Activated CD8-positive, alpha-beta T cell treated with anti-CD3 and anti-CD28 coated beads for 36 hours (primary cell): ENCODE measurements at regions of chr3 and their contacts with region 1.

Region 1: DNA sequence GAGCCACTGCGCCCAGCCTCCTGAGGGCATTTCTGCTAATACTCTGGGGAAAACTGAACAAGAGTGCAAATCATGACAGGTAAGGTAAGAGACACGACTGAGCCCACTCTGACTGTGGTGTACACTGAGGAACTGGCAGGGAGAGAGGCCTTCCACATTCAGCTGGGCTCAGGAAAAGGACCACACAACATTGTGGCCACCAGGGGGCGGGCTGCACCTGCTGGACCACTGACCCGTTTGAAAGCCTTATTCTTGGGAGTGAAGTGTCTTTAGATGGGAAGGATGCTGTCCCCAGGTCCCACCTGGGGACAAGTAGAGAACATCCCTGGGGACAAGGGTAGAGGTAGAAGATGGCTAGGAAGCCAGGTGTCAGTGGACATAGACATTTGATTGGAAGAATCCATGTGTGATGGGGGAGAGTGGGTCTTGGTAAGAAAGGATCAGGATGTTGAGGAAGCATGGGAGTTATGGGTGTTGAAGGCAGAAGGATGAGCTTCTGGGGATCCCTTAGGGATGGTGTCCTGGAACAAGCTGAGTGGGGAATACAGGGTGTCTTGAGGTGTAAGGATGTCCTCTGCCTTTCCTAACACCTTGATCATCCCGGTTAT is 6.2 kb upstream of the CTDSPL start:
- DNase-seq: peak; percentile 88
- ATAC-seq: peak; percentile 37
- H3K4me3 Mint-ChIP-seq: no peak overlapping the region
- H3K27ac Mint-ChIP-seq: no peak overlapping the region
- H3K4me1 Mint-ChIP-seq: peaks cover 6% of the 10 kb centered on the region
- H3K27me3 Mint-ChIP-seq: peaks cover 1% of the 10 kb centered on the region
- CTCF ChIP-seq: peak; percentile 96

Region 2: DNA sequence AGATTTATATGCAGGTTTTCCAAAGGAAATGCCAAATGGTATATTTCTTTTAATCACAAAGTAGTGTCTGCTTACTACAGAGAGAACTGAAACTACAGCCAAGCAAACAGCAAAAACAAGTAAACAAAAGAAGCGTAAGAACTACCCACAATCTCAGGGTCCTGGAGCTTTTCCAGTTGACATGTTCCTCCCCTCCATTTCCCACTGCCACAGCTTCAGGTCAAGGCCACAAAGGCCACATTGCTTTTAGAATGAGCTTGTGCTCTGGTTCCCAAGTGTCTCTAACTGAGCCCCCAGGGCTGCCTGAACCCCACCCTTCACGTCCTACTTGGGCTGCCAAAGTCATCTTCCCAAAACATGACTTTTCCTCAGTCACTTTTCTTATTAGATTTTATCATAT is 30.3 kb after region 1 on chr3:
- CTCF ChIA-PET with region 1: interaction called, 14 read pairs
- POLR2A ChIA-PET with region 1: no interaction called
- intact Hi-C with region 1: no loop called
- DNase-seq: no peak
- ATAC-seq: no peak
- H3K4me3 Mint-ChIP-seq: no peak overlapping the region
- H3K27ac Mint-ChIP-seq: no peak overlapping the region
- H3K4me1 Mint-ChIP-seq: no peaks in the 10 kb centered on the region
- H3K27me3 Mint-ChIP-seq: no peaks in the 10 kb centered on the region
- CTCF ChIP-seq: no peak

Region 3: DNA sequence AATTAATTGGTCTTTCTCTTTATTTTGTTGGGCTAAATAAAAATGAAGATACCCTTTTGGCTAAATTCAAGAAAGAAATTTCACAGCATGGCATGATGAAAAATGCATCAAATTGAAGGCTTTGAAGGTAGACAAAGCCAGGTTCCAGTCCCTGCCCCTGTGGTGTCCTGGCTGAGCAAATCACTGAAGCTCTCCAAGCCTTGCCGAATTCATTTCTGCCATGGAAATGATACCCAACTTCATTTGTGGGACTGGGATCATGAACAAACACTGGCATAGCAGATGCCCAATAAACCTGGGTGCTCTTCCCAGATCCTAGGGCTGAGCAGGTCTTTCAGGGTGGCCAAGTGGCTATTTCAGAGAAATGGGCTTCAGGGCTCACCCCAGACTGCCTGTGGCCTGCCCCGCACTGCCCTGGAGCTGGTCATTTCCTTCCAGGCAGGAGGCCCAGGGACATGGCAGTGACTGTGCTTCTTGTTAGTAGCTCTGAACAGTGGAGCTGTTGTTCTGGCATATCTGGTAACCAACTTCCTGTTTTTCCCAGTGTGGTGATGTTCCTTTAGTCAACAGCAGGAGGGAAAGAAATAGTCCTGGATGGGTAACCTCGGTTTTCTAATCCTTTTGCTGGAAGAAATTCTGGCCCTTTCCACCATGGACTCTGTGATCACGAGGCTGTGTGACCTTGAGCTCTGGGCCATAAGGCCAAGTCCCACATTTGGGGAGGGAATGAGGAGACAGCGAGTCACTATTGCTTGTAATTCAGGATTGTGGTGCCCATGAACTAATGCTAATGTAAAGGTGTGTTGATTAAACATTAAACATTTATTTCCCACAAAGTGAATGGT is 53.8 kb after region 1 on chr3:
- CTCF ChIA-PET with region 1: interaction called, 19 read pairs
- POLR2A ChIA-PET with region 1: no interaction called
- intact Hi-C with region 1: loop called (anchors 5 kb)
- DNase-seq: no peak
- ATAC-seq: no peak
- H3K4me3 Mint-ChIP-seq: no peak overlapping the region
- H3K27ac Mint-ChIP-seq: no peak overlapping the region
- H3K4me1 Mint-ChIP-seq: peaks cover 23% of the 10 kb centered on the region
- H3K27me3 Mint-ChIP-seq: peaks cover 5% of the 10 kb centered on the region
- CTCF ChIP-seq: no peak

Region 4: GRCh38 chr3:37956723-37957528 is 101.5 kb after region 1 on chr3:
- CTCF ChIA-PET with region 1: interaction called, 14 read pairs
- POLR2A ChIA-PET with region 1: interaction called, 3 read pairs
- intact Hi-C with region 1: no loop called
- DNase-seq: no peak
- ATAC-seq: no peak
- H3K4me3 Mint-ChIP-seq: no peak overlapping the region
- H3K27ac Mint-ChIP-seq: peak overlapping the region; percentile 82
- H3K4me1 Mint-ChIP-seq: peaks cover 19% of the 10 kb centered on the region
- H3K27me3 Mint-ChIP-seq: no peaks in the 10 kb centered on the region
- CTCF ChIP-seq: no peak

Region 5: DNA sequence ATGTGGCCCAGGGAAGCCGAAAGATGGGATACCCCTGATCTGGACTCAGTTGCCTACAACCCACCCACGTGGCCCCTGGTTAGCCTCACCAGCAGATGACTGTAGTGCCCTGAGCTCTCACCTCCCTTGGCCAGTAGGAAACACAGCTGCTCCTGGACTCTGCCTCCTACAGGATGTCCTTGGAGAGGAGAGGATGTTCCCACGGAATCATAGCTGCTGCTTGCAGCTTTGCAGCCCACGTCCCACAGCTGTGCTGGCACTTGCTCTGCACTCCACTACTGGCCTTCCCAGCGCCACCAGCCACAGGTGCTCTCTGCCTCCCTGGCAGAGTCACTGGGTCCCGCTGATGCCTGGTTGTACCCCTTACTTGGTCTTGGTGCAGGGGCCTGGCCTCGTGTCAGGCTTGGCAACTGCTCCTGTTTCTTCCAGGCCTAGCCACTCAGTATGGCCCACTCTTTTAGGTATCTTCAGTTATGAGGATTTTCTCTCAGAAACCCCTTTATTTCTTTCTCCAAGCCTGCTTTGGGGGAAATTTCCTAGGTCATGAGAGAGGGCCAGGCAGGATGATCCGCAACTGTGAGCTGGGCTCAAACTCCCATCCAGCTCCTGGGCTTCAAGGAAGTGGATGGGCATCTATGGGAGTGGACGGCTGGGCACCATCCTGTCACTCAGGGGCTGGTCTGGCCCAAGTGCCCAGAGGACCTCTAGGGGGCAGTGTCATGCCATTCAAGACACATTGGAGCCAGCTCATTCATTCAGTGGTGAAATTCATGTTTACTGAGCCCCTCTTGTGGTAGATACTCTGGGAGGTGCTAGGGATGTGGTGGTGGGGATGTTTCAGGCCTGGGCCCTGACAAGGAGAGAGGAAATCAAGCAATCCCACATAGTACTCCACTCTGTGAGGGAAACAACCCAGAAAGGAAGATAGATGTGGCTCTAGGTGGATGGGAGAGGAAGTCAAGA is 118.9 kb after region 1 on chr3:
- CTCF ChIA-PET with region 1: interaction called, 29 read pairs
- POLR2A ChIA-PET with region 1: no interaction called
- intact Hi-C with region 1: no loop called
- DNase-seq: peak; percentile 83
- ATAC-seq: peak; percentile 98
- H3K4me3 Mint-ChIP-seq: no peak overlapping the region
- H3K27ac Mint-ChIP-seq: no peak overlapping the region
- H3K4me1 Mint-ChIP-seq: peaks cover 4% of the 10 kb centered on the region
- H3K27me3 Mint-ChIP-seq: no peaks in the 10 kb centered on the region
- CTCF ChIP-seq: peak; percentile 83

Region 6: GRCh38 chr3:37996785-37997301 is 141.4 kb after region 1 on chr3:
- CTCF ChIA-PET with region 1: interaction called, 15 read pairs
- POLR2A ChIA-PET with region 1: no interaction called
- intact Hi-C with region 1: no loop called
- DNase-seq: peak; percentile 93
- ATAC-seq: peak; percentile 71
- H3K4me3 Mint-ChIP-seq: no peak overlapping the region
- H3K27ac Mint-ChIP-seq: peak overlapping the region; percentile 95
- H3K4me1 Mint-ChIP-seq: peaks cover 51% of the 10 kb centered on the region
- H3K27me3 Mint-ChIP-seq: no peaks in the 10 kb centered on the region
- CTCF ChIP-seq: peak; percentile 96